ENCODE measurements at regions of chr15 and their contacts with region 1.

Region 1: GRCh38 chr15:30059771-30060170 is 23.0 kb upstream of the GOLGA8J start:
- DNase-seq: no peak
- ATAC-seq: no peak
- H3K4me3 Mint-ChIP-seq: no peak overlapping the region
- H3K27ac Mint-ChIP-seq: no peak overlapping the region
- H3K4me1 Mint-ChIP-seq: peaks cover 3% of the 10 kb centered on the region
- H3K27me3 Mint-ChIP-seq: no peaks in the 10 kb centered on the region
- CTCF ChIP-seq: no peak

Region 2: GRCh38 chr15:29682781-29683180 is 377.0 kb before region 1 on chr15:
- CTCF ChIA-PET with region 1: no interaction called
- POLR2A ChIA-PET with region 1: interaction called, 10 read pairs
- DNase-seq: no peak
- ATAC-seq: no peak
- H3K4me3 Mint-ChIP-seq: no peak overlapping the region
- H3K27ac Mint-ChIP-seq: no peak overlapping the region
- H3K4me1 Mint-ChIP-seq: peaks cover 2% of the 10 kb centered on the region; the same call in 1 of the 2 replicates
- H3K27me3 Mint-ChIP-seq: no peaks in the 10 kb centered on the region
- CTCF ChIP-seq: no peak

Measured in WTC11 (cell line).